ENCODE measurements at regions of chr6 and their contacts with region 1.

Region 1: DNA sequence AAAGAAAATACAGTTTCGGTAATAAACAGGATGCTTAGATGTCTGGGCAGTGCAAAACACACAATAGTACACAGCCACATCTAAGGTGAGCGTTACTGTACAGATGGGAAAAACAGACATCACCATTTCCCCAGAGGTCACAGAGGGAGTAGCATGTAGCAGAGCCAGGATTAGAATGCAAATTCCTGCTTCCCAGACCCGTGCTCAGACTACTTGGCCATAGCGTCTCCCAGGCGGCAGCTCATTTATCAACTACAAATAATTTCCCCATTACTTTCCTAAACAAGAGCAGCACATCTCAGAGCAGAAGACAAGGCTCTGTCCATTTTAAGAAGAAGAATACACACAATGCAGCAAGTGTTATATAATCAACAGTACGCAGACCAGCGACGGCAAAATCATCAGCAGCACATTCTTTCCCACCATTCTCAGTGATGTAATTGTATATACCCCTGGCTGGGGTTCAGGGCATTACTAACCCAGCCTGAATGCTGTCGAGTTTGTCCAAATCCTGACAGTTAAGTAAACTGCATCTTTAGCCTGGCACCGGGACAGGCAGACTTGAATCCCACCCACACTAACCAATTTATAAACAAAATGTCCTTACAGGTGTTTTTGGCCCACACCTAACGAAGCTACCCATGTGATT is 61.9 kb downstream of the CNKSR3 start:
- DNase-seq: peak in 1 of 2 donors; percentile 77
- H3K4me3 ChIP-seq: peak overlapping the region in 1 of 2 donors; percentile 49
- H3K27ac ChIP-seq: peak overlapping the region; percentile 43 to 64
- H3K4me1 ChIP-seq: peaks cover 0 to 27% of the 10 kb centered on the region in 2 donors
- H3K27me3 ChIP-seq: no peaks in the 10 kb centered on the region
- CTCF ChIP-seq: peak; percentile 15 to 28 (median 18)

Region 2: DNA sequence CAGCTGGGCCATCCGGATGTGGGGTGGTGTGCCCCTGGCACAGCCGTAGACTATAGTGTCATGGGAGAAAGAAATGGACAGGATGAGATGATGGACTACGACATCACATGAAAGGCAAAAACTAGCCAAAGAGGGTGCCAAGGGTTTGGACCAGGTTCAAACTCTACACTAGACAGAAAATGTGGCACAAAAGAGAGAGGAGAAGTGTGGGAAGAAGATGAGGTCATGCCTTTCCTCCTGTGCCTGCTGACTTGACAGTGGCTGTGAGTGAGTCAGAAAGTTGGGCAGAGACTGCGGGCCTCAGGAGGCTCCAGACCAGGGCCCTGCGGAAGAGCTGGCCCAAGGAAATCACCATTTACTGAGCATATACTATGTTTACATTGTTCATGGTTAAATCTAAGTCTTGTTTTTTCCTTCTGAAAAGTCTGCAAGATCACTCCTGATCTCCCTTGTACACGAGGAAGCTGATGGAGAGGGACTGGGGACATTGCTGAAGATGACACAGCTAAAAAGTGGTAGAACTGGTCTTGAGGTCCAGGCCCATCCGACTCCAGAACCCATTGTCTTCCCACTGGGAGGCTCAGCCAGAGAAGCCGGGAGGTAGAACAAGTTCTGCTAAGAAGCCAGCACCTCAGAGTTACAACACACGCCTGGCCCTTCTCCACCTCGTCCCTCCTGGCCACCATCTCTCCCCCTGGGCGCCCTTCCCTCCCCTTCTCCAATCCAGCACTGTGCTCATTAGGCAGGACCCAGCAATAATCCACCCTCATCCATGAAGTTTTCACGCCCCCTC is 26.3 kb after region 1 on chr6:
- intact Hi-C with region 1: no loop called
- DNase-seq: peak; percentile 51 to 81
- H3K4me3 ChIP-seq: no peak overlapping the region
- H3K27ac ChIP-seq: peak overlapping the region; percentile 80 to 92
- H3K4me1 ChIP-seq: peaks cover 5 to 43% of the 10 kb centered on the region in 2 donors
- H3K27me3 ChIP-seq: no peaks in the 10 kb centered on the region
- CTCF ChIP-seq: no peak

Region 3: DNA sequence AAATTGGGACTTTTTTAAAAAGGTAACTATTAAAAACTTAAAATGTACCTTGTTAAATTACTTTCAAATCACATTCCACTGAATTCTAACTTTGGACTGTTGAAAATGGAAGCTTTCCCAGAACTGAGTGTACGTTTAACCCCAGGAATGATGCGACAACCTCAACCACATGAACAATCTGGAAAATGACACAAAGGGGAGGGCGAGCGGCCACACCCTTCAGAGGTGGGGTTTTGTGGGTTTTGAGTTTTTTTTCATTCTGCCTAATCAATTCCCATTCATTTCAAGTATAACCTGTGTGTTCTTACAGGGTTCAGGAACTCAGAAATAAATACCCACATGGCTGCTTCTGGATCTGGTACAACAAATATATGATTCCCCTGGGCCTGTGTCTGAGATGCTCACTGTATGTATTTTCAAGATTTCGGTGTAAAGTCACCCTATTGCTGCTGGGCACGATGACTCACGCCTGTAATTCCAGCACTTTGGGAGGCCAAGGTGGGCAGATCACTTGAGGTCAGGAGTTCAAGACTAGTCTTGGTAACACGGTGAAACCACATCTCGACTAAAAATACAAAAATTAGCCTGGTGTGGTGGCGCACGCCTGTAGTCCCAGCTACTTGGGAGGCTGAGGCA is 40.3 kb after region 1 on chr6:
- intact Hi-C with region 1: loop called (anchors 5 kb)
- DNase-seq: no peak
- H3K4me3 ChIP-seq: peak overlapping the region in 1 of 2 donors; percentile 28
- H3K27ac ChIP-seq: peak overlapping the region; percentile 60 to 71
- H3K4me1 ChIP-seq: peaks cover 12 to 58% of the 10 kb centered on the region in 2 donors
- H3K27me3 ChIP-seq: no peaks in the 10 kb centered on the region
- CTCF ChIP-seq: no peak

Region 4: GRCh38 chr6:154555073-154555677 is 106.6 kb after region 1 on chr6:
- intact Hi-C with region 1: no loop called
- DNase-seq: no peak
- H3K4me3 ChIP-seq: no peak overlapping the region
- H3K27ac ChIP-seq: no peak overlapping the region
- H3K4me1 ChIP-seq: no peaks in the 10 kb centered on the region
- H3K27me3 ChIP-seq: no peaks in the 10 kb centered on the region
- CTCF ChIP-seq: no peak

Region 5: DNA sequence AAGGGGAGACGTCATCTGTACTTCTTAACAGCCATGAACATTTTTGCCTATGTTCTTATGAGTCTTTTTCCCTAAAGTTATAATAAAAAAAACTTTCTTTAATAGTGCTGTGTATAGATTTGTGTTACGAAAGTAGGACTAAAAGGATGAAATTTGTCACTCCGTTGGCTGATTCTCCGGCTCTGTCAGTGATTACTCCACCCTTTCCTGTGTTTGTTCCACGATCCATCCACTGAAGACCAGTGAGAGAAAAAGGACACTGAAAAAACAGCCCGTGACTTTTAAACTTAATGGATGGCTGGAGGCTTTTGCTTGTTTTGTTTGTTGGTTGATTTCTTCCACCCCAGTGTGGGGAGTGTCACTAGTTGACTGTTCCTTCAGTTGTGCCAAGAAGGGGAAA is 1239.1 kb after region 1 on chr6:
- intact Hi-C with region 1: no loop called
- DNase-seq: no peak
- H3K4me3 ChIP-seq: no peak overlapping the region
- H3K27ac ChIP-seq: no peak overlapping the region
- H3K4me1 ChIP-seq: no peaks in the 10 kb centered on the region
- H3K27me3 ChIP-seq: no peaks in the 10 kb centered on the region
- CTCF ChIP-seq: no peak